HEK293T (cell line): ENCODE measurements at regions of chr19 and their contacts with region 1.

Region 1: DNA sequence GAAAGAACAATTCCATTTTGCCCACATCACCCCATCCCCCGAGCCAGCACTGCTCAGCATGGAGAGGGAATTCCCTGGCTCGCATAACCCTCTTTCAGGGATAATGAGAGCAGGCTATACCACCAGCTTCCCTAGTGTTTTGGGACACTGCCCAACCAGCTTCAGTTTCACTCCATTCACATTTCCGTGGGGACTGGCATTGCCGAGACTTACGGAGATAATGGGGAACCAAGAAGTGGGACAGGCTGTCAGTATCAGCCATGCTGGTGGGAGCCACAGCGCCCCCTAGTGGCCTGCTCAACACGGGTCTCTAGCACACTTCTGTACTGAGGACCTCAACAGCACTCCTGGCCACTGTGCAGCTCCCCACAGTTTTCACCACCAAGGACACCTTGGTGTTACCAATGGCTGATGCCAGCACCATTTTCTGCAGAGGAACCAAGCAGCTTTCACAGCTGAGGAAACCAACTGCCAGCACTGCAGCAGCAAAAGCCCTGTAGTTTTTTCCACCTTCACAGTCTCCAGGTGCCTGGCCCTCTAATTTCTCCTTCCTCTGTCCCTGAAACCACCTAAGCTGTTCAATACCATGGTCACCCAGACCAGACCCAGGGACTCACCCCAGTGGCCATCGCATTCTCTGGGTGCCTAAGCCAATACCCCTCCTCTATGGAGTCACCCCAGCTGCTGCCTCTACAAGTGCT is 23.7 kb downstream of the SLC6A16 start:
- DNase-seq: peak; percentile 90

Region 2: DNA sequence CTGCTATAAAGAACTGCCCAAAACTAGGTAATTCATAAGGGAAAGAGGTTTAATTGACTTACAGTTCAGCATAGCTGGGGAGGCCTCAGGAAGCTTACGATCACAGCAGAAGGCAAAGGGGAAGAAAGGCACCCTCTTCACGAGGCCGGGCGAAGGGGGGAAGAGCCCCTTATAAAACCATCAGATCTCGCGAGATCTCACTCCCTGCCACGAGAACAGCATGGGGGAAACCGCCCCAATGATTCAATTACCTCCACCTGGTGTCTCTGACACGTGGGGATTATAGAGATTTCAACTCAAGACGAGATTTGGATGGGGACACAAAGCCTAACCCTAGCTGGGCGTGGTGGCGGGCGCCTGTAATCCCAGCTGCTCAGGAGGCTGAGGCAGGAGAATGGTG is 19.1 kb before region 1 on chr19:
- CTCF ChIA-PET with region 1: no interaction called
- POLR2A ChIA-PET with region 1: no interaction called
- DNase-seq: no peak

Region 3: DNA sequence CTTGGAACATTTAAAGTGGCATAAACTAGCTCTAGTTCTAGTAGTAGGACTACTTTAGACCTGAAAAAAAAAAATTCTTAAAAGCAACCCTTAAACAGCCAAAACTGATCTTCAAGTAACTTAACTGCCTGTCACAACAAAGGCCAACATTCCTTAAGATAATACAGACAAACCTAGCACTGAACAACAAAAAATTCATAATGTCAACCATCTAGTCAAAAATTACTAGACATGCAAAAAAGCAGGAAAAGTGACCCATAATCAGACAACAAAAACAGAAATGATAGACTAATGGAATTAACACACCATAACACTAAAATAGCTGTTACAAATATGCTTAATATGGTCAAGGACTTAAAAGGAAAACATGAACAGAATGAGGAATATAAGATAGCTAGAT is 17.0 kb after region 1 on chr19:
- CTCF ChIA-PET with region 1: interaction called, 10 read pairs
- POLR2A ChIA-PET with region 1: no interaction called
- DNase-seq: no peak